ENCODE measurements at regions of chr2 and their contacts with region 1.

Region 1: GRCh38 chr2:134290358-134290757 is 36.5 kb downstream of the MGAT5 start:
- DNase-seq: peak in 4 of 9 donors; percentile 13 to 37 (median 29)
- ATAC-seq: peak; percentile 55
- H3K4me3 ChIP-seq: peak overlapping the region; percentile 2
- H3K4me3 Mint-ChIP-seq: no peak overlapping the region
- H3K27ac ChIP-seq: peak overlapping the region; percentile 33
- H3K27ac Mint-ChIP-seq: no peak overlapping the region
- H3K4me1 ChIP-seq: peaks cover 48 to 77% of the 10 kb centered on the region in 2 donors
- H3K4me1 Mint-ChIP-seq: peaks cover 0 to 39% (median 30%) of the 10 kb centered on the region in 7 donors
- H3K27me3 ChIP-seq: no peaks in the 10 kb centered on the region
- H3K27me3 Mint-ChIP-seq: peaks cover 0 to 8% (median 0%) of the 10 kb centered on the region in 5 donors

Region 2: DNA sequence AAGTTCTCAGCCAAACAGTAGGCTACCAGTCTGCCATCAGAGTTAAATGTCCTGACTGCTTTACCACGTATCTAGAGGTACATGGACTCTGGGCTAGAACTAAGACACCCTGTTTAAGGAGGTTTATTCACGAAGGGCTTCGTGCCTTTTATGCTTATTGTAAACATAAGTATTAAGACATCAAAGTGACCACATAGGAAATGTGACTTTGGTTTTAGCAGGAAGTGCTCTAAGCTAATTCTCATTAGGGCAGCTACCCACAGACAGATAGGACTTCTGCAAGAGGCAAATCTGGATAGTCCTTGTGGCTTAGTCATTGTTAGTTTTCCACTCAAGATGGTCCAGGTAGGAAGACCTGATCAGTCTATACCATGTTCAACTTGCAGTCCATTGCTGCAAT is 269.8 kb before region 1 on chr2:
- CTCF ChIA-PET with region 1: no interaction called
- POLR2A ChIA-PET with region 1: no interaction called
- intact Hi-C with region 1: no loop called
- DNase-seq: no peak
- ATAC-seq: peak; percentile 37
- H3K4me3 ChIP-seq: no peak overlapping the region
- H3K4me3 Mint-ChIP-seq: no peak overlapping the region
- H3K27ac ChIP-seq: no peak overlapping the region
- H3K27ac Mint-ChIP-seq: no peak overlapping the region
- H3K4me1 ChIP-seq: peaks cover 0 to 18% of the 10 kb centered on the region in 2 donors
- H3K4me1 Mint-ChIP-seq: peaks cover 0 to 16% (median 11%) of the 10 kb centered on the region in 7 donors
- H3K27me3 ChIP-seq: no peaks in the 10 kb centered on the region
- H3K27me3 Mint-ChIP-seq: peaks cover 4 to 9% (median 5%) of the 10 kb centered on the region in 5 donors

Region 3: DNA sequence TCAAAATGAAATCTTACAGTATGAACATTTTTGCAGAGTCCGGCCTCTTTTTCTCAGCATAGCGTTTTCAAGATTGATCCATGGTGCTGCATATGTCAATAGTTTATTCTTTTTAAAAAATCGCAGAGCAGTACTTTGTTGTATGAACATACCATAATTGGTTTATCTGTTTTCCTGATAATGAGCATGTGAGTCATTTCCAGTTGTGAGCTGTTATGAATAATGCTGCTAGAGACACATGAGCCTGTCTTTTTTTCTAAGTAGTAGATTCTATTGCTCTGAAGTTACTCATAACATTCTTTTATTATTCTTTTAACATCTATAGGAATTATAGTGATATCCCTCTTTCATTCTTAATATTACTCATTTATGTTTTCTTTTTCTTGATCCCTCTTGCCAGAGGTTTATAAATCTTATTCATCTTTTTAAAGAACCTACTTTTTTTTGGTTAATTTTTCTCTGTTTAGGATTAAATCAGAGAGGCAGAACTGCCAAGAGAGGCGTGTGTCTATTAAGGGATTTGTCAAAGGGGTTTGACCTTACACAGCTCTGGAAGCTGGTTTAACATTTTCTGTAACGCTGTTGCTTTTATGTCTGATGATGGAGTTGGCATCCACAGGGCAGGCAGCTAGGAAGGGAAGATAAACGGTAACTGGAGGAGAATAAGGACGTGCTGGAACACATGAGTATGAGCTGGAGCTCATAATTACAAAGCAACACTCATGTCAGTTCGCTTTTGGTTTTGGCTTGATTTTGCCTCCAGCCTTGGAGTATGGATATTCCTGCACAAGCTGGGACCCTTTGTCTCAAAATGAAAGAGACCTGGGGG is 11.0 kb after region 1 on chr2:
- CTCF ChIA-PET with region 1: interaction called, 3 read pairs
- POLR2A ChIA-PET with region 1: no interaction called
- intact Hi-C with region 1: loop called (anchors 1 to 2 kb)
- DNase-seq: no peak
- ATAC-seq: no peak
- H3K4me3 ChIP-seq: no peak overlapping the region
- H3K4me3 Mint-ChIP-seq: no peak overlapping the region
- H3K27ac ChIP-seq: no peak overlapping the region
- H3K27ac Mint-ChIP-seq: peak overlapping the region in 3 of 9 donors; percentile 42 to 68 (median 52)
- H3K4me1 ChIP-seq: peaks cover 4 to 13% of the 10 kb centered on the region in 2 donors
- H3K4me1 Mint-ChIP-seq: peaks cover 24 to 72% (median 64%) of the 10 kb centered on the region in 7 donors
- H3K27me3 ChIP-seq: no peaks in the 10 kb centered on the region
- H3K27me3 Mint-ChIP-seq: peaks cover 0 to 2% (median 0%) of the 10 kb centered on the region in 5 donors

Region 4: GRCh38 chr2:134324947-134325346 is 34.6 kb after region 1 on chr2:
- CTCF ChIA-PET with region 1: no interaction called
- POLR2A ChIA-PET with region 1: no interaction called
- intact Hi-C with region 1: loop called in 1 of 2 experiments (anchors 1 kb)
- DNase-seq: no peak
- ATAC-seq: peak; percentile 65
- H3K4me3 ChIP-seq: no peak overlapping the region
- H3K4me3 Mint-ChIP-seq: peak overlapping the region in 2 of 10 donors; percentile 11 to 57
- H3K27ac ChIP-seq: no peak overlapping the region
- H3K27ac Mint-ChIP-seq: peak overlapping the region in 3 of 9 donors; percentile 45 to 59 (median 46)
- H3K4me1 ChIP-seq: peaks cover 19 to 29% of the 10 kb centered on the region in 2 donors
- H3K4me1 Mint-ChIP-seq: peaks cover 59 to 73% (median 66%) of the 10 kb centered on the region in 7 donors
- H3K27me3 ChIP-seq: no peaks in the 10 kb centered on the region
- H3K27me3 Mint-ChIP-seq: no peaks in the 10 kb centered on the region

Measured in naive thymus-derived CD4-positive, alpha-beta T cell (primary cell).